ENCODE measurements at regions of chr2 and their contacts with region 1.

Region 1: GRCh38 chr2:178914259-178914849 is 107.1 kb upstream of the TTN start:
- DNase-seq: peak; percentile 37 to 53 (median 44)
- H3K4me3 ChIP-seq: no peak overlapping the region
- H3K4me3 Mint-ChIP-seq: no peak overlapping the region
- H3K27ac ChIP-seq: no peak overlapping the region
- H3K27ac Mint-ChIP-seq: peak overlapping the region in 1 of 7 donors; percentile 84
- H3K4me1 ChIP-seq: no peaks in the 10 kb centered on the region
- H3K4me1 Mint-ChIP-seq: peaks cover 0 to 1% (median 0%) of the 10 kb centered on the region in 4 donors
- H3K27me3 ChIP-seq: no peaks in the 10 kb centered on the region
- H3K27me3 Mint-ChIP-seq: peaks cover 1 to 2% of the 10 kb centered on the region in 2 donors

Region 2: DNA sequence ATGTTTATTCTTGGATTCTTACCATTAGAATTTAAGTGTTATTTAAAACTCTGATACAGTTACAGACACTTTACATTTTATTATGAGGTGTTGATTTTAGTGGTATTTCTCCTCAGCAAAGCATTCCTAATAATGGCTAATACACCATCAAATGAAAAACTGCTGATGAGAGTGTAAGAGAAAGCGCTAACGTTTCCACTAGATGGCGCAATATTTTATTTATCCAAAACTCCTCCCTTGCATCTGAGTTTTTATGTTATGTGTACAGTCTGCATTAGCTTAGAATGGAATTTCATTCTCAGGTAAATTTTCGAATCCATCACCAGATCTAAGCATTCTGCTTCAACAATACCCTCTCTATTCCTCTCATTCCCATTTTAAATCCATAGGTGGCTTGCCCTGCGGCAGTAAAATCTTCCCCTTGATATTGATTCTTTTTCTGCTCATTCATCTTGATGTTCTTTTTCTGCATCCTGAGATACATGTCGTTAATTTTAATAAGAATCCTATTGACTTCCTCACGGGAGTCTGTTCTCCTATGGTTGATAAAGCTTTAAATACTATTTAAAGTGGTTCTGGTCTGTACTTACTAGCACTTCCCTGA is 517.2 kb before region 1 on chr2:
- CTCF ChIA-PET with region 1: no interaction called
- POLR2A ChIA-PET with region 1: no interaction called
- intact Hi-C with region 1: loop called (anchors 5 kb)
- DNase-seq: peak in 4 of 5 donors; percentile 32 to 47 (median 37)
- H3K4me3 ChIP-seq: no peak overlapping the region
- H3K4me3 Mint-ChIP-seq: no peak overlapping the region
- H3K27ac ChIP-seq: no peak overlapping the region
- H3K27ac Mint-ChIP-seq: no peak overlapping the region
- H3K4me1 ChIP-seq: no peaks in the 10 kb centered on the region
- H3K4me1 Mint-ChIP-seq: no peaks in the 10 kb centered on the region
- H3K27me3 ChIP-seq: no peaks in the 10 kb centered on the region
- H3K27me3 Mint-ChIP-seq: peaks cover 0 to 3% of the 10 kb centered on the region in 2 donors

Region 3: DNA sequence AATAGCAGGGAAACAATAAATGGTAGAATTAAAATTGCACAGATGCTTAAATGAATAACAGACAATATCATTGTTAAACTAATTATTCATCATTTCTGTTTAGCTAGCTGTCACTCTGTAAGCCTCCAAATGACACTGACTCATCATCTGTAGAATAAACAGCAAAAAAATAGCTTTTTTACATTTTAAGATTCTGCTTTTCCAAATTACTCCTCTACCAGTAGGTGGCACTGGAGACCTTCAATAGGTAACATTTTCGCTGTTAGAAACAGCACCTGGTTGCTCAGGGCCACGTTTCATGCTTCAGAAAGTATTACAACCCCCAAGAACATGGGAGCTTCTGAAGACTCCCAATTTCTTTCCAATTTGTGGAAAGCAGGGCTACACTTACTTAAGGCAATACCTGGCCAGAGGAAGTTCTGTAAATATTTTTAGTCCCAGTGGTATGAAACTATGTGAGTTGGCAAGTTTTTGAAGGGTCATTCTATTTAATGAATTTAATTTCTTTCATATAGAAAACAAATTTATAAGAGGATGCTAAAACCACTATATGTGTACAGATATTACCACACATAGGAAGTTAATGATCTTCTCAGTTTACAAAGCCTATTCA is 152.5 kb before region 1 on chr2:
- CTCF ChIA-PET with region 1: interaction called, 8 read pairs
- POLR2A ChIA-PET with region 1: no interaction called
- intact Hi-C with region 1: loop called (anchors 1 kb)
- DNase-seq: peak in 4 of 5 donors; percentile 20 to 31 (median 27)
- H3K4me3 ChIP-seq: no peak overlapping the region
- H3K4me3 Mint-ChIP-seq: no peak overlapping the region
- H3K27ac ChIP-seq: no peak overlapping the region
- H3K27ac Mint-ChIP-seq: no peak overlapping the region
- H3K4me1 ChIP-seq: no peaks in the 10 kb centered on the region
- H3K4me1 Mint-ChIP-seq: no peaks in the 10 kb centered on the region
- H3K27me3 ChIP-seq: no peaks in the 10 kb centered on the region
- H3K27me3 Mint-ChIP-seq: peaks cover 0 to 1% of the 10 kb centered on the region in 2 donors

Region 4: DNA sequence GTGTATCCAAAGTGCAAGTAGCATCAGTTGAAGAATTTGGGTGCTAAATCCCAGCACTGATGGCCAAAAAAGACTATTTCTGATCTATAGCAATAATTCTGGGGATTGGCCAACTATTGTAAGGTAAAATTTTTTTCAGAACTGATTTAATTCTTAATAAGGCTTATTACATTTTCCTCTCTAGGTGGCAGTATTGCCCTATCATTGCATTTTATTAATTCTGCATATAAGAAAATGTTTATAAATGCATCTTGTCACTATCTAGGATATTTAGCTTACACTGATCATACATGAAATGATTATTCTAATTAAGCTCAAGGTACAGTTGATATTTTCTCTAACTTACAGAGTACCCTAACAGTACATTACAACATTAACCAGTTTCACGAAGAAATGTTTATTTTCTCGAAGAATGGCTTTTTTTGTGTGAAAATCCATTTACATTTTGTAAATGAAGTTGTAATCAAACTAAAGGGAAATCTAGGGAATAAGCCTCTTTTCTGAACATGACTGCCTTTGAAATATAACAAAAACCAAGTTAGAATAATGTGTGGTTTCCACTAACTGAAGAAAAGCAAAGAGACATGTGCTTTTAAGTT is 118.2 kb before region 1 on chr2:
- CTCF ChIA-PET with region 1: interaction called, 5 read pairs
- POLR2A ChIA-PET with region 1: no interaction called
- intact Hi-C with region 1: loop called (anchors 1 kb)
- DNase-seq: peak in 4 of 5 donors; percentile 9 to 14 (median 12)
- H3K4me3 ChIP-seq: no peak overlapping the region
- H3K4me3 Mint-ChIP-seq: no peak overlapping the region
- H3K27ac ChIP-seq: no peak overlapping the region
- H3K27ac Mint-ChIP-seq: no peak overlapping the region
- H3K4me1 ChIP-seq: no peaks in the 10 kb centered on the region
- H3K4me1 Mint-ChIP-seq: no peaks in the 10 kb centered on the region
- H3K27me3 ChIP-seq: no peaks in the 10 kb centered on the region
- H3K27me3 Mint-ChIP-seq: peaks cover 0 to 3% of the 10 kb centered on the region in 2 donors

Region 5: DNA sequence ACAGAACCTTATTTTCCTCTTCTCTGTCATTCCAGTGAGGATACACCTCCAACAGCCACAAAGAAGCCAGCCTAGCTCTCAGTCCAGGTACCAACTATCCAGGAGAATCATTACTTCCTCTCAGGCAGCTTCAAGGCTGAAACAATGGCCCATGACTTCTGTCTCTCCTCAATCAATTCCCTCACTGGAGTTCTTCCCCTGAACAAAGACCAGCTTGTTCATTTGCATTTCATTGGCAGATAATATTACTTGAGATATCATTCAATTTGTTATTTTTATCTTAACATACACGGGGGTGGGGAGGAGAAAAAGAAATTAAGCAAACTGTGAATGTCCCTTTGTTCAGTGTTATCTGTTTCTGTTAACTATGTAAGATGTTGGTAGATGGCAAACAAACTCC is 91.6 kb after region 1 on chr2:
- CTCF ChIA-PET with region 1: no interaction called
- POLR2A ChIA-PET with region 1: no interaction called
- intact Hi-C with region 1: no loop called
- DNase-seq: no peak
- H3K4me3 ChIP-seq: no peak overlapping the region
- H3K4me3 Mint-ChIP-seq: no peak overlapping the region
- H3K27ac ChIP-seq: no peak overlapping the region
- H3K27ac Mint-ChIP-seq: no peak overlapping the region
- H3K4me1 ChIP-seq: no peaks in the 10 kb centered on the region
- H3K4me1 Mint-ChIP-seq: no peaks in the 10 kb centered on the region
- H3K27me3 ChIP-seq: no peaks in the 10 kb centered on the region
- H3K27me3 Mint-ChIP-seq: peaks cover 0 to 1% of the 10 kb centered on the region in 2 donors